Mucosa of descending colon (tissue), 3 donors: ENCODE measurements at regions of chr5 and their contacts with region 1.

Region 1: GRCh38 chr5:73215891-73216610 is 43.1 kb downstream of the TMEM174 start:
- DNase-seq: peak; percentile 84 to 92 (median 89)
- ATAC-seq: peak; percentile 96
- H3K4me3 ChIP-seq: no peak overlapping the region
- H3K4me1 ChIP-seq: no peaks in the 10 kb centered on the region
- CTCF ChIP-seq: peak; percentile 83

Region 2: DNA sequence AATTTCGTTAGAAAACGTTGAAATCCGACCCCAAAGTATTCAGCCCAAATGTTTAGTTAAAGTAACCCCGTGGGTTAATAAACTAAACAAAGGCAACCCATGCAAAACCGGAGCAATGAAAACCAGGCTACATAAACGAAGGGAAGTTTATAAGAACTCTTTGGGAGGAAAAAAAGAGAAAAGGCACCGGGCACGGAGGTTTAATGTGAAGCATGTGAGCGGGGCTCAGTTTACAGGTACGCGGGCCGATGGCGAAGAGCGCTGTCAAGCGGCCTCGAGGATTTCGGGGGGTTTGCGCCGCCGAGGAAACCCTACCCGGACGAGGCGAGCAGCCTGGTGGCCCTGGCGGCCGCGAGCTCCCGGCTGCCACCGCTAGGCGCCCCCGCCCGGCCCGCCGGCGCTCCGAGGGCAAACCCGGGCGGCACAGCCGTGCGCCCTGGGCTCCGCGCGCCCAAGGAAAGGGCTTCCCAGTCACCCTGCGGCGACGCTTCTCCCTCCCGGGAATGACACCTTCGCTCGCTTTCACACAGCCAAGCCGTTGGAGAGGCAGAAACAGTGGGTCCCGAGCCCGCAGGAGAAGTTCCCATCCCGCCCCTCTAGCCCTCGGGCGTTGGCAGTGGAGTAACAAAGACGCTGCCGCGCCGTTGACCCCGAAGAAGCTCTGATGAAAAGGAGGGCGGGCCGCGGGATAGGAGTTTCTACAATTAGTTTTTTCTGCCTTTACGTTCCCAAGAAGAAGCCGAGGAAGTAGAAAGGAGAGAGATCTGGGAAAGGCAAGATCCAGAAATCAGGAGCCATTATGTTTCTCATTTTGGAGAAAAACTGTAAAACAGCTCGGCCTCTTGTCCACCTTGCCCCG is 83.0 kb after region 1 on chr5:
- intact Hi-C with region 1: loop called in 1 of 2 experiments (anchors 10 kb)
- DNase-seq: peak in 2 of 3 donors; percentile 12 to 46
- ATAC-seq: peak; percentile 70
- H3K4me3 ChIP-seq: no peak overlapping the region
- H3K4me1 ChIP-seq: peaks cover 7% of the 10 kb centered on the region
- CTCF ChIP-seq: peak; percentile 20

Region 3: DNA sequence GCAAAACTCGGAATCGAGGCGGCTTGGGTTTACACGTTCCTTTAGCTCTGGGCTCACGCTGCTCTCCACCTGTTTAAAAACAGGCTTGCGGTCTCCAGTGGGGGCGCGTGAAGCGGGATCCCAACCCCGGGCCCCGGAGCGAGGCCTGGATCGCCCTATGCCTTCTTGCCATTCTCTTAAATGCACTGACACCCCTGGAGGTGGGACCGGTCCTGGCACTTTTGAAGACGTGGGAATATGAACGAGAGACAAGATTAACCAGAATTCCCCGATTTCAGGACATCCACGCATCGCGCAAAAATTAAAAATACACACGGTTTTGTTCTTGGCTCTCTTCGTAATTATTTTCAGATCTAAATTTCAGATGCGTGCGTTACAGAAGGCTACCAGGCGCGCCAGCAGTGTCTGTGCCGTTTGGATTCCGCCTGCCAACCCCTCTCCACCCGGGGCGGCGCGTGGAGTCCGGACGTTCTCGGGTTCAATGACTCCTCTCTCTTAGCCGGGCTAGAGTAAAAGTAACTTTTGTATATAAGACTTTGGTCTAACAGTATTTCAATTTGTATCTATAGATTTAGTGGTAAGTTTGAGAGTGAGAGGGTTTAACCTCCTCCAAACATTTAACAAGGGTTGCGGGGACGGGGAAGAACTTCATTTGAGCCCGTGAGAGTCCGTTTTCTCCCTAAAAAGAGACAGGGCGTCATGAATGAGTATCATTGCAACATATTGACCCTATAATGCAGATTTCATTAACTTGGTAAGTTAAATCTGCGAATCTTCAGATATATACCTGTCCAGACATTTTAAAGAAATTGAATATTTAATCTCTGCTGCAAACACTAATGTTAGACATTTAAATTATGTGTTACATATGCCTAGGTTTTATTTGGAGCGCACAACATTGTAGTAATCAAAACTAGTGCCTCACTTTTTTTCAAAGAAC is 228.7 kb after region 1 on chr5:
- intact Hi-C with region 1: loop called in 1 of 2 experiments (anchors 5 kb)
- DNase-seq: no peak
- ATAC-seq: no peak
- H3K4me3 ChIP-seq: no peak overlapping the region
- H3K4me1 ChIP-seq: no peaks in the 10 kb centered on the region
- CTCF ChIP-seq: no peak

Region 4: DNA sequence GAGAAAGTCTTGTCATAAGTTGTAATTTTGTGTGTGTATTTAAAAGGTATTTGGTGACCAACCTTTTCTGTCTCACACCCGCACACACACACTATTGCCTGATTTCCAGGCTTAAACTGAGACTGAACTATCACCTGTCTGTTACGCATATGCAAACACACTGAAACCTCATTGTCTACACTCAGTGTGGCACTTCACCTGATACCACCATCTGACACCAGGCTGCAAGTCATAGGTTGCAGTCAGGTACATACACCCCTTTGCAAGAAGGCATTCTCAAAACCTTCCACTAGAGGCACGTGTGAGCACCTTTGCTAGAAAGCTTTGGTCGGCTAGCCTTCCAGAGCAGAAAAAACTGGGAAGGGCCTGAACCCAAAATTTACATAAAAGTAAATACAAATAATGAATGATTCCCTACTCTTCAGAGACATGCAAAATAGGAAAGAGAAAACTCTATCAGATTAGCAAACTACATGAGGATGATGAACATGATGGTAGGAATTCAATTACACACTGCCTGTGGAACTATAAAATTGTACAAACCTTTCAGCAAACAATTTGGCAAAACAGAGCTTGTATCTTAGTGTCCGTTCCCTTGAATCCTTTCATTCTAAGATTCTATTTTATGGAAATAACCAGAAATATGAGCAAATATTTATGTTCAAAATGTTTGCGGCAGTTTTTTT is 238.4 kb after region 1 on chr5:
- intact Hi-C with region 1: loop called (anchors 5 kb)
- DNase-seq: peak in 1 of 3 donors; percentile 74
- ATAC-seq: peak; percentile 86
- H3K4me3 ChIP-seq: no peak overlapping the region
- H3K4me1 ChIP-seq: peaks cover 9% of the 10 kb centered on the region
- CTCF ChIP-seq: peak; percentile 77